ENCODE measurements at regions of chr12 and their contacts with region 1.

Region 1: GRCh38 chr12:64256166-64256800 is 34.2 kb upstream of the KICS2 start:
- DNase-seq: peak; percentile 71
- H3K4me3 Mint-ChIP-seq: no peak overlapping the region
- H3K27ac Mint-ChIP-seq: no peak overlapping the region
- H3K4me1 Mint-ChIP-seq: no peaks in the 10 kb centered on the region
- H3K27me3 Mint-ChIP-seq: no peaks in the 10 kb centered on the region

Region 2: GRCh38 chr12:63103494-63104131 is 1152.7 kb before region 1 on chr12:
- intact Hi-C with region 1: loop called (anchors 5 kb)
- DNase-seq: peak; percentile 60
- H3K4me3 Mint-ChIP-seq: no peak overlapping the region
- H3K27ac Mint-ChIP-seq: no peak overlapping the region
- H3K4me1 Mint-ChIP-seq: no peaks in the 10 kb centered on the region
- H3K27me3 Mint-ChIP-seq: no peaks in the 10 kb centered on the region

Region 3: DNA sequence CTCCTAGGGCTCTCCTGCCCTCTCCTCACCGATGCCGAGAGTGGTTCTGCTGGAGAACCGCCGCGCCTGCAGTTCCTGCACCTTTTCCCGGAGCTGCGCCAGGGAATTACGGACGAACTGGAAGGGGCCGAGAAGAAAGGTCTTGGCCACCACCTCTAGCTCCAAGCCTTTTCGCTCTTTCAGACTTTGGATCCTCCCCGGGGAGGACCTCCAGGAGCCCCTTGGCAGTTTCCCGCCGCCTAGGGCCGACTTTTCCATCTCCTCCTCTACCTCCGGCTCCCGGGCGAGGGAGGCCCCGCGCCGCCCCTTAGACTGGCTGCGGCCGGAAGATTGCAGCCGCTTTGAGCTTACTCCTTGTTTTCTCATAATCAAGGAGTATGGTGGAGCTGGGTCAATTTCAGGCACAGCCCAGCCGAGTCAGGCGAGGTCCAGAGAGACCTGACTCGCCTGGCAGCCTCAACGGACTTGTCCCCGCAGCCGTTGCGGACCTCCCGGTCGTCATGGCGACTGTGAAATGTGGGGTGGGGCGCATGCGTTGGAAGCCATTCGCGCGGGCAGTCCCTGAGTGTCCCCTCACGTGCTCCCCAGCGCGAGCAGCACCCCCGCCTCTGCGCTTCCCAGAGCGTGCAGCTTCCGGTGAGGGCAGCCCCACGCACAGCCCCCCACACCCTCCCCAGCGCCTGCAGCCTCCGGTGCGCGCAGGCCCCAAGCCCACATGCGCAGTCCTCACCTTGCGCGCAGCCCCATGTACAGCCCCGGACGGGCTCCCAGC is 588.1 kb before region 1 on chr12 and contains the start of gene DPY19L2:
- intact Hi-C with region 1: loop called (anchors 2 kb)
- DNase-seq: peak; percentile 75
- H3K4me3 Mint-ChIP-seq: peak within 1 kb of the TSS; percentile 87
- H3K27ac Mint-ChIP-seq: peak within 1 kb of the TSS; percentile 60
- H3K4me1 Mint-ChIP-seq: peaks cover 10% of the 10 kb centered on the region
- H3K27me3 Mint-ChIP-seq: peaks cover 38% of the 10 kb centered on the region
- total RNA-seq, gene DPY19L2: 0.61 and 0.80 TPM in 2 replicates

Region 4: GRCh38 chr12:63838411-63838810 is 417.9 kb before region 1 on chr12:
- intact Hi-C with region 1: loop called (anchors 2 kb)
- DNase-seq: no peak
- H3K4me3 Mint-ChIP-seq: no peak overlapping the region
- H3K27ac Mint-ChIP-seq: no peak overlapping the region
- H3K4me1 Mint-ChIP-seq: peaks cover 3% of the 10 kb centered on the region
- H3K27me3 Mint-ChIP-seq: peaks cover 29% of the 10 kb centered on the region

Region 5: GRCh38 chr12:64440100-64440499 is 183.8 kb after region 1 on chr12:
- intact Hi-C with region 1: no loop called
- DNase-seq: no peak
- H3K4me3 Mint-ChIP-seq: no peak overlapping the region
- H3K27ac Mint-ChIP-seq: no peak overlapping the region
- H3K4me1 Mint-ChIP-seq: peaks cover 2% of the 10 kb centered on the region
- H3K27me3 Mint-ChIP-seq: no peaks in the 10 kb centered on the region